Left cardiac atrium (tissue), 4 donors: ENCODE measurements at regions of chr1 and their contacts with region 1.

Region 1: GRCh38 chr1:29426810-29427209 is 190.5 kb downstream of the PTPRU start:
- DNase-seq: peak; percentile 41
- ATAC-seq: peak in 1 of 2 donors; percentile 87

Region 2: DNA sequence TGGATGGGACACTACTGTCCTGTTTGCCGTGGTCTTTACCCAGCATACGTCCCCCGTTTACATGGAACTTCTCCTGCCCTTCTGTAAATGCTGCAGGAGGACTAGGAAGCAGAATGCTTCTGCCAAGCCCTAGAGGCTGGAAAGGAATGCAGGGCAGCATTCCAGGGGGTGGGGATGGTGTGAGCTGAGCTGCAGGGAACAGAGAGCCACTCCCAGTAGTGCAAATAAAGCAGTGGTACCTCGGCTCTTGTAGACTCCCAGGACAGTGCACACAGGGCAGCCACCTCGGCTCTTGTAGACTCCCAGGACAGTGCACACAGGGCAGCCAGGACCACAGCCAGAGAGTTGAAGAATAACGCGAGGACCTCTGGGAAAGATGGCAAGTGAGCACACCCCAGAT is 155.1 kb before region 1 on chr1:
- intact Hi-C with region 1: loop called in 1 of 2 experiments (anchors 5 kb)
- DNase-seq: peak; percentile 73
- ATAC-seq: peak; percentile 96

Region 3: DNA sequence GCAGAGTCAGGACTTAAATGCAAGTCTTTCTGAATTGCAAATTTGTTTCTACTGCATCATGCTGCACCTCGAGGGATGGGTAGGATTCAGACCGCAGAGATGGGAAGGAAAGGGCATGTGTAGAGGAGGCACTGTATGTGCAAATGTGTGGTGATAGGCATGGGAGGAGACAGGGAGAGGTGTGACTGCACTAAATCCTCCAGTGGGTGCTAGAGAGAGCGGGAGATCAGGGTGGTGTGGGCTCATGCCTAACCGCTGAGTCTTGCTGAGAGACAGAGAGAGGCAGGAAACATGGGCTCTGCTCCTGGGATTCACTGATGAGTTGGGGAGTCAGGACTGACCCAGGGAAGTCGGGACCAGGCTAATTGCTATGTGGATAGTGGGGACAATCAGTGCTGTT is 129.4 kb before region 1 on chr1:
- intact Hi-C with region 1: no loop called
- DNase-seq: no peak
- ATAC-seq: no peak

Region 4: DNA sequence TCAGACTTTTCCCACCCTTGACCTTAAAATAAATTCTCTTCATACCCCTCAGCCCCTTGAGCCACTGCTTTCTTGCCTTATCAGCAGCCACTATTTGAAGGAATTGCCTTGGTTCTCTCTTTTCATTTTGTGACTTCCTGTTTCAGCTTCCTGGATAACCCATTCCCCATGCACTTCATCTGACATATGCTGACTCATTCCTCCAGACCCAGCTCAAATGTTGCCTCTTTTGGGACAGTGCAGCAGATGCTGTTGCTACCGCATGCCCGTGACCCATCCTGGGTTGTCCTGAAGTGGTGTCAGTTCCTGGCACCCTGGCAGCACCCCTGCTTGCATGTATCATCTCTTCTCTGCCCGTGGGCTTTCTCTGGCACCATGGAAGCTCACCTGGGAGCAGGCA is 305.6 kb after region 1 on chr1:
- intact Hi-C with region 1: no loop called
- DNase-seq: no peak
- ATAC-seq: no peak